Kidney (tissue), 22 donors: ENCODE measurements at regions of chr12 and their contacts with region 1.

Region 1: GRCh38 chr12:93569656-93570551 is 2.6 kb upstream of the SOCS2 start:
- DNase-seq: peak; percentile 92 to 97 (median 93)
- H3K4me3 ChIP-seq: peak overlapping the region; percentile 67 to 81 (median 70)
- H3K27ac ChIP-seq: peak overlapping the region; percentile 98 to 99
- H3K4me1 ChIP-seq: peaks cover 0 to 2% (median 0%) of the 10 kb centered on the region in 3 donors
- H3K27me3 ChIP-seq: no peaks in the 10 kb centered on the region
- CTCF ChIP-seq: peak; percentile 71

Region 2: GRCh38 chr12:93979189-93979588 is 409.3 kb after region 1 on chr12:
- intact Hi-C with region 1: loop called (anchors 10 kb)
- DNase-seq: peak in 2 of 5 donors; percentile 39 to 52
- H3K4me3 ChIP-seq: no peak overlapping the region
- H3K27ac ChIP-seq: no peak overlapping the region
- H3K4me1 ChIP-seq: no peaks in the 10 kb centered on the region
- H3K27me3 ChIP-seq: no peaks in the 10 kb centered on the region
- CTCF ChIP-seq: peak; percentile 61